ENCODE measurements at regions of chr1 and their contacts with region 1.

Region 1: GRCh38 chr1:26111530-26112406 is at the start of gene PDIK1L:
- DNase-seq: peak; percentile 96
- H3K4me3 Mint-ChIP-seq: peak within 1 kb of the TSS; percentile 97
- H3K27ac Mint-ChIP-seq: peak within 1 kb of the TSS; percentile 93
- H3K4me1 Mint-ChIP-seq: peaks cover 28% of the 10 kb centered on the region
- H3K27me3 Mint-ChIP-seq: no peaks in the 10 kb centered on the region
- total RNA-seq, gene PDIK1L: 14.9 to 15.2 TPM

Region 2: GRCh38 chr1:26035959-26036755 is 75.6 kb before region 1 on chr1:
- CTCF ChIA-PET with region 1: interaction called, 5 read pairs
- POLR2A ChIA-PET with region 1: no interaction called
- intact Hi-C with region 1: loop called (anchors 5 kb)
- DNase-seq: peak; percentile 84
- H3K4me3 Mint-ChIP-seq: peak overlapping the region; percentile 91
- H3K27ac Mint-ChIP-seq: no peak overlapping the region
- H3K4me1 Mint-ChIP-seq: peaks cover 11% of the 10 kb centered on the region
- H3K27me3 Mint-ChIP-seq: peaks cover 5% of the 10 kb centered on the region

Region 3: GRCh38 chr1:26126321-26127084 is 14.7 kb after region 1 on chr1:
- CTCF ChIA-PET with region 1: interaction called, 8 read pairs
- POLR2A ChIA-PET with region 1: interaction called, 24 read pairs
- intact Hi-C with region 1: loop called (anchors 1 kb)
- DNase-seq: peak; percentile 57
- H3K4me3 Mint-ChIP-seq: peak overlapping the region; percentile 58
- H3K27ac Mint-ChIP-seq: peak overlapping the region; percentile 89
- H3K4me1 Mint-ChIP-seq: peaks cover 49% of the 10 kb centered on the region
- H3K27me3 Mint-ChIP-seq: no peaks in the 10 kb centered on the region

Region 4: DNA sequence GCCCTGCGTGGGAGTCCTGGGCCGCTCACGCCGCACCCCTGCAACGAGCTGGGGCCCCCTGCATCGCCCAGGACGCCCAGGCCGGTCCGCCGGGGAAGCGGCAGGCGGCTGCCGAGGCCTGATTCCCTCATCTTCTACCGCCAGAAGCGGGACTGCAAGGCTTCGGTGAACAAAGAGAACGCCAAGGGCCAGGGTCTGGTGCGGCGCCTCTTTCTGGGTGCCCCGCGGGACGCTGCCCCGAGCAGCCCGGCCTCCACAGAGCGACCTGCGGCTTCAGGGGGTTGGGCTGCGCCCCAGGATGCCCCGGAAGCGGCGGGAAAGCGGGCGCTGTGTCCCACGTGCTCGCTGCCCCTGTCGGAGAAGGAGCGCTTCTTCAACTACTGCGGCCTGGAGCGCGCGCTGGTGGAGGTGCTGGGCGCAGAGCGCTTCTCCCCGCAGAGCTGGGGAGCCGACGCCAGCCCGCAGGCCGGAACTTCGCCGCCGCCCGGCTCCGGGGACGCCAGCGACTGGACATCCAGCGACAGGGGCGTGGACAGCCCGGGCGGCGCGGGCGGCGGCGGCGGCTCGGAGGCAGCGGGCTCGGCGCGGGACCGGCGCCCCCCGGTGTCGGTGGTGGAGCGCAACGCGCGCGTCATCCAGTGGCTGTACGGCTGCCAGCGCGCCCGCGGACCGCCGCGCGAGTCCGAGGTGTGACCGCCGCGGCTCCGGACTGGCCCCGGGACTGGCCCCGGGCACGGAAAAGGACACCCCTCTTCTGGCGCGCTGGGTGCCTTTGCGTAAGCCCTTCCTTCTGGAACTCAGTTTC is 49.8 kb after region 1 on chr1:
- CTCF ChIA-PET with region 1: no interaction called
- POLR2A ChIA-PET with region 1: no interaction called
- intact Hi-C with region 1: loop called (anchors 5 kb)
- DNase-seq: peak; percentile 50
- H3K4me3 Mint-ChIP-seq: peak overlapping the region; percentile 24
- H3K27ac Mint-ChIP-seq: no peak overlapping the region
- H3K4me1 Mint-ChIP-seq: peaks cover 10% of the 10 kb centered on the region
- H3K27me3 Mint-ChIP-seq: peaks cover 31% of the 10 kb centered on the region